GM10248 (cell line): ENCODE measurements at regions of chr2 and their contacts with region 1.

Region 1: DNA sequence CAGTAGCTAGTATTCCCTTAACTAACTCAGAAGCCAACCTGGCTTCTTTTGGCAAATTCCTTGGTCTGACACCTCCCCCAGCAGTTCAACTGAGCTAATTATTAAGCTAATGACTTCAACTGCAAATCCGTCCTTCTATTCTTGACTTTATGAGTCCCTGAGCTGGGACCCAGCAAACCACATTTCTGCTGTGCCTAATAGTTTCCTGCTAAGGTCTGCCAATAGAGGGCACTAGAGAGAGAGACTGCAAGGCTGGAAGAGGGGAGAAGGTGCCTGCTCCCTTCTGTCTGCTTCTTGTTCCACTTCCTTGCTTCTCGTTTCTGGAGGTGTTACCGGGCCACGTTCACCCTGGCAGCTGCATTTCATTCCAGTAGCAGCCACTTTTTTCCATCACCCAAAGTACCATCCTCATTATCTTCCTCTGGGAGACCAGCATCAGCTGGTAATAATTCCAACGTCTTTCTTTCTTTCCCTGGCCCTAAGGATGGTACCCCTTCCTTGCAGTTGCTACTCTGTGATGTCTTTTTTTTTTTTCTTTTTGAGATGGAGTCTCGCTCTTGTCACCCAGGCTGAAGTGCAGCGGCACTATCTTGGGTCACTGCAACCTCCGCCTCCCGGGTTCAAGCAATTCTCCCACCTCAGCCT is 352.0 kb downstream of the TNS1 start:
- DNase-seq: peak; percentile 69
- CTCF ChIP-seq: peak; percentile 81

Region 2: DNA sequence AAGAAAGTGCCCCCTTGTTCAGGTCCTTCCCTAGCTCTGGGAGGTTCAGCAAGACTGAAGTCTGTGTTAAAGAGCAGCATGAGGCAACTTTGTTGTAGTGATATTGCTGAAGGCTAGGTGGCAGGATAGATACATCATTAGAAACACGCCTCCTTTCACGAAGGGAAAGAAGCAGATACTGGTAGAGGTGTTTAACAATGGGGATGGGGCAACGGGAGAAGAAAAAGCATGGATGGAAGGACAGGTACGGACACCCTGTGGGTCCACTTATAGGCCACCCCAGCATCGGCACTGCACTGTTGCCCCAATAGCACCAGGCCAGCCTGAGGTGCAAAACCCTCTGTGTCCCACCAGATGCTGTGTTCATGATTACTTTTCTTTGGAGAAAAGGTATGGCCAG is 951.9 kb before region 1 on chr2:
- CTCF ChIA-PET with region 1: interaction called, 11 read pairs
- POLR2A ChIA-PET with region 1: no interaction called
- DNase-seq: peak; percentile 55
- CTCF ChIP-seq: peak; percentile 69

Region 3: GRCh38 chr2:217510771-217511291 is 140.0 kb before region 1 on chr2:
- CTCF ChIA-PET with region 1: interaction called, 11 read pairs
- POLR2A ChIA-PET with region 1: no interaction called
- DNase-seq: peak; percentile 74
- CTCF ChIP-seq: peak; percentile 71

Region 4: DNA sequence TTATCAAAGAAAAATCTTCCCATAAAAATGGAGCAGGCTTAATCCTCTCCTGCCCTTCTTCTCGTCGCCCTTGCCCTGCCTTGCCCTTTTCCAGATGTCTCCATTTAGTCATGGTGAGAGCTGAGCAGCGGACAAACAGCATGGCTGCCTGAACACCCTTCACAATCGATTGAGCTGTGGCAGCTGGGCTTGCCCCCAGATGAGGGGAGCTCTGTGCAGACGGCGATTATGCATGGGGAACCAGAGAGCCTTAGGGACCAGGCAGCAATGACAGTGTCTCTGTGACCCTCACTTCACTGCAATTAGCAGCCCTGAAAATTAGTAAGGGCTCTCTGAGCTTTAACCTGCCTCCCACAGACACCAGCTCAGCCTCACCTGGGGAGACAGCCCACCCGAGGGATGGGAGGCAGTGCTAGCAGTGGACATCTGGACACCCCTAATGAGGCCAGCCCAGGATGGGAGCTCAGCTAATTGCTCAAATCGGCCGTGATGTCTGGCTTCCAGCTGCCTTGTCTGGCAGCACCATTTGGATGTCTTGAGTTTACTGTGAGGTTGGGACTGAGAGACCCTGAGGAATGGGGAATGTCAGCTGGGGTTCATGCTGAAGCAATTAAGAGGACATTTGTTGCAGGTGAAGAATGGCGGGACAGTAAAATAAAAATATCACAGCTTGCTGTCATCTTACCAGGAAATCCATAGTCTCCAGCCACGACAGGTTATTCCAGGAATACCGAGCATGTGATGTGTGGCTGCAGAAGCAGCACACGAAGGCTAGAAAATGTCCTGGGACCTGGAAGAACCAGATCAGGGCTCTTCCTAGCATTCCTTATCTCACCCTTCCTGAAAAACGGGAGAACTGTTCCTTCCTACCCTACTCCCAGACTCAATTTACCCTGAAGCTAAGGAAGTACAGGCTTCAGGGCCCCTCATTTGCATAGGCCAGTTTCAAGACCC is 13.6 kb before region 1 on chr2:
- CTCF ChIA-PET with region 1: interaction called, 34 read pairs
- POLR2A ChIA-PET with region 1: no interaction called
- DNase-seq: no peak
- CTCF ChIP-seq: no peak

Region 5: DNA sequence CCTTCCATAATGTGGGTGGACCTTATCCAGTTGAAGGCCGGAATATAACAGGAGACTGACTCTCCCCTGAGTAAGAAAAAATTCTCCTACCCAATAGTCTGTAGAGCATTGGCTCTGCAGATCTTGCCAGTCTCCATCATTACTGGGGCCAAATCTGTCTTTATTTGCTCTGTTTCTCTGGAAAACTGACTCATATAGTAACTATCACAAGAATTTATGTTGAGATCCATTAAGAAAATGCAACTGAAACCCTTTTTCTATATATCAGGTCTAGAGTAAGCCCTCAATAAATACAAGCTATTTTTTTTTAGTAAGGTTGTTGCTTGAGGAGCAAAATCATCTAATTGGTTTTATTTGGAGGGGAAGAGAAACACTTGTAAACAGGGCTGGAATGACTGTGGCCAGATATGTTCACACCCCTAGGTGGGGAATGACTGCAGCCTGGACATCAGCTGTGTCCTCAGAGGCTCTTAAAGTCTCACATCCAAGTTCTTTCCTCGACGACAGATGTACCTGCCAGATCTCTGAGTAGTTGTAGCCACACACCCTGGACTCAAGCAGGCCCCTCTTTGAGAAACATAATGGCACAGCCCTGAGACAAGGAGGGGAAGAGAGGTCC is 12.3 kb after region 1 on chr2:
- CTCF ChIA-PET with region 1: interaction called, 28 read pairs
- POLR2A ChIA-PET with region 1: no interaction called
- DNase-seq: no peak
- CTCF ChIP-seq: no peak

Region 6: DNA sequence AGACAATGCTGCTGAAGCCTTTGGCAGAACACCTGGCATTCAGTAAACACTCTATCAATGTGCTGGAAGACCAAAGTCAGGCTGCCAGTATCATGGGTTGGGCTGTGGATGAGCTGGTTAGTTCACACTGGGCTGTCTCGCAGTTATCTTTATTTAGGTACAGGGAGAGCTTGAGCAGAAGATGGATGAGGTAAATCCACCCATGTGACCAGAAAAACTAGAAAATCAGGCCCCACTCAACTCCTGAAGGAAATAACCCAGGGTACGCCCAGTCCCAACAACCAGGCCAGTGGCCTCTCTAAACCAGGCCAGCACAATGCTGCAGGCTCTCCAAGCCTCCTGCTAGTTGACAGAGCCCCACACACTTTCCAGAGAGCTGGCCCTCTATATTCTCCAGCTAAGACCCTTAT is 21.7 kb after region 1 on chr2:
- CTCF ChIA-PET with region 1: interaction called, 12 read pairs
- POLR2A ChIA-PET with region 1: no interaction called
- DNase-seq: no peak
- CTCF ChIP-seq: no peak

Region 7: DNA sequence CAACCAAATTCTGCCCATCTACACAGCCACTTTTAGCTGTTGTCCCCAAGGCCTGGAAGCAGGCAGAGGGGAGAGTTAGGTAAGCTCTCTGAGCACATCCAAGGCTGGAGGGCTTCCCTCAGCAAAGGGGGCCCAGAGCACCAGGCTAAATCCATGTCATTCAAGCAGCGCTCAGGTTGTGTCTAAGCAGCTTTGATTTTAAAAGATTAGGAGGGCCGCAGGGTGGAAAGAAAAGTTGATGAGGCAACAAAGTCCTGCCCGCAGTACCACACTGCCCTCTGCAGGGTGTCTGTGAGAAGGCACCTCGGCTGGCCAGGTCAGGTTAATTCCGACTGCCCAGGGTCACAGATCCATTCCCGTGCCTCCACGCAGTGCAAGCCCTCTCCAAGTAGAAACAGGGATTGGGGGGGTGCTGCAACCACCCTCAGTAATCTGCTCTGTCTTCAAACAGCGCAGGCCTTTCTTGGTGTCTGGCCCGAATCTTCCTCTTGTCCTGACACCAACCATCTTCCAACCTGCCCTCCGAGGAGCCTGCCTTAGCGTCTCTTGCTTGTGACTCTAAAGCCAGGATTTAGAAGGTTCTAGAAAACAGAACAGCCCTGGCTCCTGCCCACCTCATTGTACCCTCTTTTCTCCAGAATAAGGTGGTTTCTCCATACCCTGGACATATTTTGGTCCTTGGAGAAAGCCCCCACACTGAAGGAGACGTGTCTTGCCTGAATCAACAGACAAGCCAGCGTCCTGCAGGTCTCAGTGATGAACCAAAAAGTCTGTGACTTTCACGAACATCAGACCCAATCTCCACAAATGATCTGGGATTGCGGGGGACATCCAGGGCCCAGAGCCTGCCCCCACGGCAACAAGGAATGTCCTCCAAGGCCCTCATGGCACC is 62.8 kb after region 1 on chr2:
- CTCF ChIA-PET with region 1: interaction called, 74 read pairs
- POLR2A ChIA-PET with region 1: no interaction called
- DNase-seq: peak; percentile 76
- CTCF ChIP-seq: peak; percentile 90

Region 8: GRCh38 chr2:217858519-217859491 is 208.0 kb after region 1 on chr2:
- CTCF ChIA-PET with region 1: no interaction called
- POLR2A ChIA-PET with region 1: no interaction called
- DNase-seq: no peak
- CTCF ChIP-seq: no peak